ENCODE measurements at regions of chr9 and their contacts with region 1.

Region 1: DNA sequence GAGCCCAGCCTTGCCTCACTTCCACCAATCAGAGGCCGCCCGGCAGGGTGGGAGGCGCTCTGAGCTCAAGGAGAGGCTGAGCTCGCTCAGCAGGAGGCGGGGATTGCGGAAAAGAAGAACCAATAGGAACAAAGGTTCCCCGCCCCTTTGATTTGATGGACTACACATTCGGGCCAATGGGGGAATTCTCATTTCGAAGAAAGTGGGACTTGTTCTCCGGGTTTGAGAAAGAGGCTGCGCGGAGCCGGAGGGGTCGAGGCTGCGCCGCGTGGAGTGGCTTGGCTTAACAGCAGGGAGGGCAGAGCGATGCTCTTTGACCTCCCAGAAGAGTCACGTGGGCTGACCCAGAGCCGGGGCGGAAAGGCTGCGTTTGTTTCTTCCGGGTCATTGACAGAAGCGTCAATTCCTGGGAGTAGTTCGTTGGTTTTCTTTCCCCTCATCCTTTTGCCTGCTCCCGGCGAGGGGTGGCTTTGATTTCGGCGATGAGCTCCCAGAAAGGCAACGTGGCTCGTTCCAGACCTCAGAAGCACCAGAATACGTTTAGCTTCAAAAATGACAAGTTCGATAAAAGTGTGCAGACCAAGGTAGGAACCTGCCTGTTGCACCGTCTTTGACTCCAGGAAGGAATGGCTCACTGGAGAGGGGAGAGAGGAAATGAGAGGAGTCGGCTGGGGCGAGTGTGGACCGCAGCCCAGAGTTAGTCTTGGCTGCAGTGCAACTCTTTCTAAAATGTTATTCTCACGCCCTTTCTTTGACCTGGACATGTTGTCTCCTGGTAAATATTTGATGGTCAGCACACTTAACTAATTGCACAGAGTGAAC is at the start of gene C9orf85:
- DNase-seq: peak; percentile 89 to 99 (median 94)
- ATAC-seq: peak; percentile 93
- H3K4me3 ChIP-seq: peak within 1 kb of the TSS; percentile 67
- H3K4me3 Mint-ChIP-seq: peak within 1 kb of the TSS; percentile 99
- H3K27ac ChIP-seq: peak within 1 kb of the TSS; percentile 64 to 71
- H3K27ac Mint-ChIP-seq: peak within 1 kb of the TSS; percentile 86
- H3K4me1 ChIP-seq: peaks cover 13% of the 10 kb centered on the region
- H3K4me1 Mint-ChIP-seq: peaks cover 75% of the 10 kb centered on the region
- H3K27me3 ChIP-seq: no peaks in the 10 kb centered on the region
- H3K27me3 Mint-ChIP-seq: no peaks in the 10 kb centered on the region
- CTCF ChIP-seq: no peak
- total RNA-seq, gene C9orf85: 3.4 to 3.5 TPM

Region 2: DNA sequence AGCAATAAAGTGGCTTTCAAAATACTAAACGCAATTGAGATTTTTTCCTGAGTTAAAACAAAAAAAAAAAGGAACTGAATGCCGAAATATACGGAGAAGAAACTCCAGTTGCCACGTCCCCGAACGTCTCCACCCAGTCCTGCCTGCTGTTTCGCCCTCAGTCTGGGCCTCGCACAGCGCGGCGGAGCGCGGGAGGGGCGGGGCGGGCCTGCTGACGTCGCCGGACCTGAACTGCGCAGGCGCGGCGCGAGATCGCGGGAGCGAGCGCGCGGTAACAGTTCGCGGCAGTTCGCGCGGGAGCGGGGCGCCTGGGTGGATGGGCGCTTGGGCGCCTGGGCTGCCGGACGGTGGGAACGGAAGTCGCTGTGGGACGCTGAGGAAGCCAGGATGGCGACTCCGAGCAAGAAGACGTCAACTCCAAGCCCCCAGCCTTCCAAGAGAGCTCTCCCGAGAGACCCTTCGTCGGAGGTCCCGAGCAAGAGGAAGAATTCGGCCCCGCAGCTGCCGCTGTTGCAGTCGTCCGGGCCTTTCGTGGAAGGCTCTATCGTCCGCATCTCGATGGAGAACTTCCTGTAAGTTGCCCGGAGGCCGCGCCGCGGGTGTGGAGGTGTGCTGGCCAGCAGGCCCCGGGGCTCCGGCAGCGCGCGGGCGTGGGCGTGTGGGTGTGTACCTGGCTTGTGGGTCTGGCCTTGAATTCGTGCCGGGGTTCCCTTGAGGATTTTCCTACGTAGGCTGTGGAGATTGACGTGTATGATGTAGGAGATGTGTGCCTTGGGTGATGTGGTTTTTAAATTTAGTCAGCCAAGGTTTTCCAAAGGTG is 1652.6 kb before region 1 on chr9 and contains the start of gene SMC5:
- CTCF ChIA-PET with region 1: no interaction called
- POLR2A ChIA-PET with region 1: no interaction called
- intact Hi-C with region 1: loop called in 1 of 2 experiments (anchors 10 kb)
- DNase-seq: peak; percentile 79 to 97 (median 88)
- ATAC-seq: peak; percentile 81
- H3K4me3 ChIP-seq: peak within 1 kb of the TSS; percentile 89
- H3K4me3 Mint-ChIP-seq: peak within 1 kb of the TSS; percentile 93
- H3K27ac ChIP-seq: peak within 1 kb of the TSS; percentile 89 to 94
- H3K27ac Mint-ChIP-seq: peak within 1 kb of the TSS; percentile 96
- H3K4me1 ChIP-seq: peaks cover 44% of the 10 kb centered on the region
- H3K4me1 Mint-ChIP-seq: peaks cover 61% of the 10 kb centered on the region
- H3K27me3 ChIP-seq: no peaks in the 10 kb centered on the region
- H3K27me3 Mint-ChIP-seq: no peaks in the 10 kb centered on the region
- CTCF ChIP-seq: no peak
- total RNA-seq, gene SMC5: 37.7 to 38.1 TPM

Region 3: GRCh38 chr9:71795097-71795813 is 116.2 kb before region 1 on chr9:
- CTCF ChIA-PET with region 1: no interaction called
- POLR2A ChIA-PET with region 1: interaction called, 10 read pairs
- intact Hi-C with region 1: loop called in 1 of 2 experiments (anchors 2 kb)
- DNase-seq: peak in 6 of 14 experiments; percentile 14 to 89 (median 59)
- ATAC-seq: peak; percentile 88
- H3K4me3 ChIP-seq: no peak overlapping the region
- H3K4me3 Mint-ChIP-seq: peak overlapping the region; percentile 60
- H3K27ac ChIP-seq: peak overlapping the region; percentile 46 to 86
- H3K27ac Mint-ChIP-seq: peak overlapping the region; percentile 94
- H3K4me1 ChIP-seq: peaks cover 57% of the 10 kb centered on the region
- H3K4me1 Mint-ChIP-seq: peaks cover 73% of the 10 kb centered on the region
- H3K27me3 ChIP-seq: no peaks in the 10 kb centered on the region
- H3K27me3 Mint-ChIP-seq: no peaks in the 10 kb centered on the region
- CTCF ChIP-seq: no peak

Region 4: DNA sequence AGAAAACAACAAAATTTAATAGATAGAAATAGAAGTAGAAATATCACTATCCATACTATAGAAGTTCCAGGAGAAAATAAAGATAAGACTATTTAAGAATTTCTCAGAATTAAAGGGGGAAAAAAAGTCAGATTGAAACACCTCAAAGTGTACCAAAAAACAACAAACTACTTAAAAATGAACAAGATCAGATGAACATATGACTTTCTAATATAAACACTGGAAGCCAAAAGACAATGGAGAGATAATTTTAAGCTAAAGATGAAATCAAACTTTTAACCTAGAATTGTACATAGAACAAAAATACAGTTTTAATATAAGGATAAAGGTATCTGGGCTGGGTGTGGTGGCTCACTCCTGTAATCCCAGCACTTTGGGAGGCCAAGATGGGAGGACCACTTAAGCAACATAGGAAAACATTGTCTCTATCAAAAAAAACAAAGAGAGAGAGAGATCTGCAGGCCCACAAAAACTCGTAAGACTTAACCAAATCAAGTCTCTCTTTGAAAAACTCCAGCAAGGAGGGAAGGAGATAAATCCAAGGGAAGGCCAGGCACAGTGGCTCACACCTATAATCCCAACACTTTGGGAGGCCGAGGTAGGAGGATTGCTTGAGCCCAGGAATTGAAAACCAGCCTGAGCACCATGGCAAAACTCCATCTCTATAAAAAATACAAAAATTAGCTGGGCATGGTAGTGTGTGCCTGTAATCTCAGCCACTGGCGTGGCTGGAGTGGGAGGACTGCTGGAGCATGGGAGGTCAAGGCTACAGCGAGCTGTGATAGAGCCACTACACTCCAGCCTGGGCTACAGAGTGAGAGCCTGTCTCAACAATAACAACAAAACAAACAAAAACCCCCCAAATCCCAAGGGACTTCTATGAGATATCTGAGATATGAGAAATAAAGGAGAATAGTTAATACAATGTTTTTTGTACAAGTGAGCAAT is 32.9 kb before region 1 on chr9:
- CTCF ChIA-PET with region 1: no interaction called
- POLR2A ChIA-PET with region 1: no interaction called
- intact Hi-C with region 1: loop called in 1 of 2 experiments (anchors 5 kb)
- DNase-seq: no peak
- ATAC-seq: no peak
- H3K4me3 ChIP-seq: no peak overlapping the region
- H3K4me3 Mint-ChIP-seq: no peak overlapping the region
- H3K27ac ChIP-seq: no peak overlapping the region
- H3K27ac Mint-ChIP-seq: no peak overlapping the region
- H3K4me1 ChIP-seq: no peaks in the 10 kb centered on the region
- H3K4me1 Mint-ChIP-seq: peaks cover 14% of the 10 kb centered on the region
- H3K27me3 ChIP-seq: no peaks in the 10 kb centered on the region
- H3K27me3 Mint-ChIP-seq: no peaks in the 10 kb centered on the region
- CTCF ChIP-seq: no peak

Region 5: GRCh38 chr9:72533337-72533736 is 621.9 kb after region 1 on chr9:
- CTCF ChIA-PET with region 1: no interaction called
- POLR2A ChIA-PET with region 1: no interaction called
- intact Hi-C with region 1: loop called in 1 of 2 experiments (anchors 5 kb)
- DNase-seq: no peak
- ATAC-seq: no peak
- H3K4me3 ChIP-seq: no peak overlapping the region
- H3K4me3 Mint-ChIP-seq: no peak overlapping the region
- H3K27ac ChIP-seq: no peak overlapping the region
- H3K27ac Mint-ChIP-seq: no peak overlapping the region
- H3K4me1 ChIP-seq: peaks cover 3% of the 10 kb centered on the region
- H3K4me1 Mint-ChIP-seq: peaks cover 5% of the 10 kb centered on the region
- H3K27me3 ChIP-seq: no peaks in the 10 kb centered on the region
- H3K27me3 Mint-ChIP-seq: no peaks in the 10 kb centered on the region
- CTCF ChIP-seq: no peak

Measured in CD4-positive, alpha-beta T cell (primary cell).